Naive thymus-derived CD8-positive, alpha-beta T cell (primary cell): ENCODE measurements at regions of chr12 and their contacts with region 1.

Region 1: GRCh38 chr12:52069327-52070184 is at the start of gene ATG101:
- DNase-seq: peak; percentile 70 to 94 (median 85)
- ATAC-seq: peak; percentile 94 to 95
- H3K4me3 Mint-ChIP-seq: peak within 1 kb of the TSS; percentile 91 to 99 (median 96)
- H3K27ac Mint-ChIP-seq: peak within 1 kb of the TSS; percentile 92 to 100 (median 99)
- H3K4me1 Mint-ChIP-seq: peaks cover 37 to 55% (median 48%) of the 10 kb centered on the region in 4 donors
- H3K27me3 Mint-ChIP-seq: no peaks in the 10 kb centered on the region
- polyA plus RNA-seq, gene ATG101: 17.6 to 28.8 (median 22.2) TPM

Region 2: DNA sequence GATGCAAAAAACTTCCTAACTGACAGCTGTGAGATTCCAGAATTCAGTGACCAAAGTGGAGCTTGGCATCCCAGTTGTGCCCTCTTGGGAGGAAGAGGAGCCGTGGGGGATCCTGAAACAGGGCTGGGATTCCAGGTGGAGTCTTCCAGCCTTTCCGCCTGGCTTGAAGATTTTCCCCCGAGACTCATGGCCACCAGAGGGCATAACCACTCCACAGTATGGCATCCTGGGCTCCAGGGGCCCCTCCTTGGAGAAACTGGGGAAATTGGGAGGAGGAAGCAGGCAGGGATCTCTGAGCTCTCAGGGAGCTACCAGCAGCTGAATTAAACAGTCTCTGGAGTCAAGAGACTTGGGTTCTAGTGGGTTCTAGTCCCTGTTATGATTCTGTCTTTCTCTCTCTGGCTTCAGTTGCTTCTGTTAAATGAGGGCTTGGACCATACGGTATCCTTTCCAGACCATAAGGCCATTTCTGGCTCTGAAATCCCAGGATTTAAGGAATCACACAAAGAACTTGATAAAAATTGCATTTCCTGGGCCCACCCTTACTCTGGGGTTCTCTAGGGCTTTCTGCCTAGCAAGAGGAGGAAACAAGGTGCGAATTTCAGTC is 65.4 kb before region 1 on chr12:
- POLR2A ChIA-PET with region 1: interaction called, 11 read pairs
- DNase-seq: no peak
- ATAC-seq: no peak
- H3K4me3 Mint-ChIP-seq: no peak overlapping the region
- H3K27ac Mint-ChIP-seq: peak overlapping the region in 2 of 10 donors; percentile 15 to 28
- H3K4me1 Mint-ChIP-seq: peaks cover 15 to 31% (median 28%) of the 10 kb centered on the region in 4 donors
- H3K27me3 Mint-ChIP-seq: no peaks in the 10 kb centered on the region

Region 3: GRCh38 chr12:52023182-52023975 is 46.2 kb before region 1 on chr12:
- POLR2A ChIA-PET with region 1: interaction called, 28 read pairs
- DNase-seq: peak; percentile 80 to 95 (median 90)
- ATAC-seq: peak; percentile 59 to 63
- H3K4me3 Mint-ChIP-seq: peak overlapping the region; percentile 79 to 97 (median 88)
- H3K27ac Mint-ChIP-seq: peak overlapping the region in 9 of 10 donors; percentile 82 to 97 (median 92)
- H3K4me1 Mint-ChIP-seq: peaks cover 26 to 49% (median 45%) of the 10 kb centered on the region in 4 donors
- H3K27me3 Mint-ChIP-seq: no peaks in the 10 kb centered on the region

Region 4: DNA sequence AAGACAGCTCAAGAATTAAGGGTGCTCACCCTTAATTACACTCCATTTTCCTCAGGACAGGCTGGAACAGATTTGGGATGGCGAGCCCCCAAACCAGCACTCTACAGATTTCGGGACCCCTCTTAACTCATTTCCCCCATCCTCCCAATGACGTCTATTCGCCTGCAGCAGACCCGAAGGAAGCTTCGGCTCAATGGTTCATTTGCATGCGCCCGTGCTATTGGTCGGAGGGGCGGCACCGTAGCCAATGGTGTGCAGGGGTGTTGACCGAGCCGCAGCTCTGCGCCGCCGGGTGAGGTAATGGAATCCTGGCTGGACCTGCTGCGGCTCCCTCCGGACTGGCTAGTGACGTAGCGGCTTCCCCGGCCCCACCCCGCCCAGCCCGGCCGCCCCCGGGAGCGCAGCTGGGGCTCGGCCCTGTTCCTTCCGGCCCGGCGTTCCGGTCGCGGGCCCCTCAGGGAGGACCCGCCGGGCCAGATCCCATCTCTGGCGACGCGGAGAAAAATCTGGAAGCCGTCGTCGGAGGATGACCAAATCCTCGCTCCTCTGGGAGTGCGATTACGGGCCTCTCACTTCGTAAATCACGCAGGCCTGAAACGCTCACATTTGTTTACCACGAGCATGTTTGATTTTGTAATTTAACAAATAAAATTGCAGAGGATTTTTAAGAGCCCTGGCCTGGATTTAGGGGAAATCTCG is 36.6 kb before region 1 on chr12:
- POLR2A ChIA-PET with region 1: interaction called, 14 read pairs
- DNase-seq: peak; percentile 72 to 94 (median 82)
- ATAC-seq: peak; percentile 80 to 83
- H3K4me3 Mint-ChIP-seq: peak overlapping the region; percentile 64 to 86 (median 84)
- H3K27ac Mint-ChIP-seq: peak overlapping the region; percentile 63 to 99 (median 94)
- H3K4me1 Mint-ChIP-seq: peaks cover 12 to 45% (median 33%) of the 10 kb centered on the region in 4 donors
- H3K27me3 Mint-ChIP-seq: no peaks in the 10 kb centered on the region

Region 5: GRCh38 chr12:52041695-52042123 is 27.8 kb before region 1 on chr12:
- POLR2A ChIA-PET with region 1: interaction called, 12 read pairs
- DNase-seq: peak; percentile 44 to 87 (median 70)
- ATAC-seq: peak; percentile 65 to 80
- H3K4me3 Mint-ChIP-seq: peak overlapping the region; percentile 52 to 88 (median 71)
- H3K27ac Mint-ChIP-seq: peak overlapping the region; percentile 61 to 93 (median 87)
- H3K4me1 Mint-ChIP-seq: peaks cover 20 to 74% (median 41%) of the 10 kb centered on the region in 4 donors
- H3K27me3 Mint-ChIP-seq: peaks cover 0 to 1% (median 0%) of the 10 kb centered on the region in 5 donors

Region 6: DNA sequence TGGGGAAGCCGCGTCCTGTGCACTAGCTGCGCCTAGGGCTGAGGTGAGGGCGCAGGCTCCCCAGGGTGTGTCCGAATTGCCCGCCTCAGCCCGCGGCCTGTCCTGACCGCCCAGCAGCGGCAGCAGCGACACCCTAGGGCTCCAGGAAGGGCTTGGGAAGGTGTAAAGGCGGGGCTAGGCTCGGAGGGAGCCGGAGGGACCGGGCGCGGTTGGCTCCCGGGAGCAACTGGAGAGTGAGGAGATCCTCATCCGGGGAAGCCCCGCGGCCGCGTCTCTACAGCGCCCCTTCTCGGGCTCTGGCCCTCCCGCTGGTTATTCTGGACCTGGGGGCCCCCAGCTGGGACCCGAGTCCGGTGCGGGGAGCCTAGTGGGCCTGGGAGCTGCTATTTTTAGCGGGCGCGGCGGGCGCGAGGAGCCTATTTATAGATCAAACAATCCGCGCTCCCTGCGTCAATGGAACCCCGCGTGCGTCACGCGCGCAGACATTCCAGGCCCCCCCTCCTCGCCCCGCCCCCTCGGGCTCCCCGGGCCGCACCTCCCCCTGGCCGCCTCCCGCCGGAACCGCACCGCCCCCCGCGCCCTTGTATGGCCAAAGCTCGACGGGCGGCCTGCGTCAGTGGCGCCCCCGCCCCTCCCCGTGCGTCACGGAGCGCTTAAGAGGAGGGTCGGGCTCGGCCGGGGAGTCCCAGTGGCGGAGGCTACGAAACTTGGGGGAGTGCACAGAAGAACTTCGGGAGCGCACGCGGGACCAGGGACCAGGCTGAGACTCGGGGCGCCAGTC is 18.6 kb before region 1 on chr12 and contains the start of gene NR4A1:
- POLR2A ChIA-PET with region 1: interaction called, 24 read pairs
- DNase-seq: peak; percentile 96 to 100 (median 99)
- ATAC-seq: peak; percentile 87 to 89
- H3K4me3 Mint-ChIP-seq: peak within 1 kb of the TSS; percentile 91 to 98 (median 94)
- H3K27ac Mint-ChIP-seq: peak within 1 kb of the TSS; percentile 89 to 100 (median 99)
- H3K4me1 Mint-ChIP-seq: peaks cover 23 to 47% (median 43%) of the 10 kb centered on the region in 4 donors
- H3K27me3 Mint-ChIP-seq: peaks cover 0 to 10% (median 6%) of the 10 kb centered on the region in 5 donors
- polyA plus RNA-seq, gene NR4A1: 0.39 to 0.79 (median 0.45) TPM

Region 7: GRCh38 chr12:52058631-52059361 is 10.8 kb before region 1 on chr12:
- POLR2A ChIA-PET with region 1: interaction called, 13 read pairs
- DNase-seq: peak in 1 of 10 donors; percentile 31
- ATAC-seq: no peak
- H3K4me3 Mint-ChIP-seq: no peak overlapping the region
- H3K27ac Mint-ChIP-seq: peak overlapping the region in 4 of 10 donors; percentile 4 to 48 (median 33)
- H3K4me1 Mint-ChIP-seq: peaks cover 0 to 3% (median under 1%) of the 10 kb centered on the region in 4 donors
- H3K27me3 Mint-ChIP-seq: no peaks in the 10 kb centered on the region

Region 8: DNA sequence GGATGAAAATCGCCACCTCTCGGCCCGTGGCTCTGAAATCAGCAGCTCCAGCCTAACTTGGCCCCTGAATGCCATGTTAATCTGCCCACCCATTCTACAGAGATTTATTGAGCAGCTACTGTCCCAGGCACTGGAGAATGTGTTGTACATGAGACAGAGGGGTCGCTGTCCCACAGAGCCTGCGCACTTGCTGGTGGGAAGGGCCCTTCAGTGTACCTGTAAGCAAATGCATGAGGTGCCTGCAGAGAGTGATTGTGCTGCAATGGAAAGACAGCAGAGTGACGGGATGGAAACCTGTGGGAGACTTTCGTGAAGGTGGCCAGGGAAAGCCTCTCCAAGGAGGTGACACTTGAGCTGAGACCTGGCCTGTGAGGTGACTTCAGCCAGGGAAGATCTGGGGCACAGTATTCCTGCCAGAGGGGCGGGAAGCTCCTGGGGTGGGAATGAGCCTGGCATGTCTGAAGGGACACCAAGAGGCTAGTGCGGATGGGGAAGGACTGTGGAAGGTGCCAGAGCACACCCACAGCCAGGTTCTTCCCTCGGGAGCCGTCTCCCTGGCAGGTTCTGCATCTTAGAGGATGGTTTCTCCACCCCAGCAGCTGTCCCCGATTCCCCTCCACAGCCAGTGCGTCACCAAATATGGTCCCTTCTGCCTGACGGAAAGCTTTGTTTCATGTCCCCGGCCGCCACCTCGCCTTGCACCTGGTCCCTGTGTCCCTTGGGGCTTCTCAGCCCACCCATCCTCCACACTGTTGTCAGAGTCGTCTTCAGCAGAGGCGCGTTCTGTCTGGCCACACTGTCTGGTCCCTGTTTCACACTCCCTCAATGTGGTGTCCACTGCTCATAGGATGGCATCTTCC is 18.6 kb after region 1 on chr12:
- POLR2A ChIA-PET with region 1: no interaction called
- DNase-seq: no peak
- ATAC-seq: no peak
- H3K4me3 Mint-ChIP-seq: no peak overlapping the region
- H3K27ac Mint-ChIP-seq: peak overlapping the region in 1 of 10 donors; percentile 46
- H3K4me1 Mint-ChIP-seq: peaks cover 4 to 13% (median 4%) of the 10 kb centered on the region in 4 donors
- H3K27me3 Mint-ChIP-seq: peaks cover 16 to 51% (median 39%) of the 10 kb centered on the region in 5 donors